ENCODE measurements at regions of chr13 and their contacts with region 1.

Region 1: GRCh38 chr13:75715601-75716523 is 79.7 kb downstream of the LMO7 start:
- DNase-seq: no peak
- H3K4me3 Mint-ChIP-seq: no peak overlapping the region
- H3K27ac Mint-ChIP-seq: no peak overlapping the region
- H3K4me1 Mint-ChIP-seq: peaks cover 8% of the 10 kb centered on the region
- H3K27me3 Mint-ChIP-seq: no peaks in the 10 kb centered on the region

Region 2: DNA sequence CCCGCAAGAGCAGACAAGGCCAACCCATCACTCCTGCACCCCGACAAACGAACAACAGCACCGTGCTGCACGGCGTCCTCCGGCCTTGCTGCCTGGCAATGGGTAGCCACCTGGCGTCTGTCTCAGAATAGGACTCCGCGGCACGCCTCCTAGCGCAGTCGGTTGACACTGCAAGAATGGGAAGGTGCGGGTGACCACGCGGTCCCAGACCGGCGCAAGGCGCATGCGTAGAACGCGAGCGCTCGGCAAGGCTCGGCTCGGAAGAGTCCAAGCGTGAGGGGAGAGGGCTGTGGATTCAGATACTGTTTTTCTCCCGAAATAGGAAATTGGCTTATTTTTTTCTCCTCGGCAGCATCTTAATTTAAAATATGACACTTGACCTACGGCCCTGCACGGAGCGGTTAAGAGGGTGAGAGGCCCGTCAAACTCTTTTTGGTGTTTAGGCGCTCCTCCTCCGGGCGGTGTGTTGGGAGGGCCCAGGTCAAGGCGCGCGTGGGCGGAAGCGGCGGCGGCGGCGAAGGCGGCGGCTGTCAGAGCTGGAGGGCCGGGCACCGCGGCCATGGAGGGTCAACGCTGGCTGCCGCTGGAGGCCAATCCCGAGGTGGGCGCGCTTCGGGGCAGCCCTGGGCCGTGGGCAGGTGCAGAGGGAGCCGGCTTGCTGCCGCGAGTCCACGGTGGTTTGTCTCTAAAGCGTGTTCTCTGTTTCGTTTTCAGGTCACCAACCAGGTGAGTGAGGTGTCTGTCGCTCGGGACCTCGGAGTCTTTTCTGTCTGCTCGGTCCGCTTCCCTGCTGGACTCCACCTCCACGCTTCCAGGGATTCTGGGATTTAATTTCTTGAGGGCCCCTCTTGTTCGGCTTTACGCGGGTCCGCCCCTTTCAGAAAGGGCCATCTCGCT is 166.4 kb before region 1 on chr13 and contains the start of gene UCHL3:
- intact Hi-C with region 1: no loop called
- DNase-seq: peak; percentile 95
- H3K4me3 Mint-ChIP-seq: peak within 1 kb of the TSS; percentile 97
- H3K27ac Mint-ChIP-seq: peak within 1 kb of the TSS; percentile 96
- H3K4me1 Mint-ChIP-seq: peaks cover 19% of the 10 kb centered on the region
- H3K27me3 Mint-ChIP-seq: no peaks in the 10 kb centered on the region
- total RNA-seq, gene UCHL3: 35.4 and 37.9 TPM in 2 replicates

Region 3: DNA sequence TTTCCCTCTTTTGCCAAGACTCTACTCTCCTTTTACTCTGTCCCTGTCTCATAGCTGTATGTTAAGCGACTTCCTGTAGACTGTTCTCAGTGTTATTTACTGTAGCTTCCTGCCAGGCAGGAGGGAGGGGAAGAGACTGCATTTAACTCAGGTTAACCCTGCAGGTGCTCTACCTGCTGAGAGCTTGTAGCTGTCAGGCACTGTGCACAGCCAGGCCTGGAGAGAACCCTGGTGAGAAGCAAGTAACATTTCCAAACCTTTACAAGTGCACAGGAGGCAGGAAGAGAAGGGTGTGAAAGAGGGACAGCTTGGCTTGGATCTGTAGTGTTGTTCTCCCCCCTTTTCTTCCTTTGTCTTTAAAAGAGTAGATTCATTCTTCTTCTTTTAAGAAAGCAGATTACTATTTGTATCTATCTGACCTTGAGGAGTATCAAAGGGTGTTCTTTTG is 87.3 kb after region 1 on chr13:
- intact Hi-C with region 1: loop called (anchors 2 kb)
- DNase-seq: no peak
- H3K4me3 Mint-ChIP-seq: no peak overlapping the region
- H3K27ac Mint-ChIP-seq: no peak overlapping the region
- H3K4me1 Mint-ChIP-seq: peaks cover 46% of the 10 kb centered on the region
- H3K27me3 Mint-ChIP-seq: no peaks in the 10 kb centered on the region